ENCODE measurements at regions of chr15 and their contacts with region 1.

Region 1: DNA sequence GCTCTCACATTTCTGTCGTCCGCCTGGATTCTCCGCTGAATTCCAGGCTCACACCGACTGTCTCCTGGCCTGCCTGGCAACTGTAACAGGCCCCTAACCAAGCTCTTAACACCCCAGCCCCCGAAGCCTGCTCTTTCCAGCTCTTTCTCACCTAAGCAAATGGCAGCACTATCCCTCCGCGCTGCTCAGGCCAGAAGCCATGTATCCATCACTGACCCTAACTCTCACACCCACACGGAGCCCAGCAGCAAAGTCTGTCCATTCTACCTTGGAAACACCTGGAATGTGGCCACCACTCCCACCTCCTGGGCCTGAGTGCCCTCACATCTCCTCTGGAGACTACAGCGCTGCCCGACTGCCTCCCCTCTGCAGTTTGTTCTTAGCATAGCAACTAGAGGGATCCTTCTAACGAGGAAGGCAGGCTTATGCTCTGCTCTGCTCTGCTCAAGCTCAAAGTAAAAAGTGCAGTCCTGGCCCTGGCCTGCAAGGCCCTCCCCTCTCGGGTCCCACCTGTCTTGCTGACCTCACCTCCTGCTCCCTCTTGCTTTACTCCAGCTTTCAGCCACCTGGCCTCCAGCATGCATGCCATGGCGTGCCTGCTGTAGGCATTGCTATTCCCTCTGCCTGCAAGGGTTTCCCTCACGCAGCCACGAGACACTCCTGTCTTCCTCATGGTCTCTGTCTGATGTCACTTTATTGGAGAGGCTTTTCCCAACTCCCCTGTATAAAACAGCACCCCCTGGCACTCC is 27.2 kb downstream of the FEM1B start:
- DNase-seq: peak; percentile 33
- ATAC-seq: no peak
- H3K4me3 Mint-ChIP-seq: no peak overlapping the region
- H3K27ac Mint-ChIP-seq: no peak overlapping the region
- H3K4me1 Mint-ChIP-seq: peaks cover 9% of the 10 kb centered on the region
- H3K27me3 Mint-ChIP-seq: peaks cover 6% of the 10 kb centered on the region

Region 2: DNA sequence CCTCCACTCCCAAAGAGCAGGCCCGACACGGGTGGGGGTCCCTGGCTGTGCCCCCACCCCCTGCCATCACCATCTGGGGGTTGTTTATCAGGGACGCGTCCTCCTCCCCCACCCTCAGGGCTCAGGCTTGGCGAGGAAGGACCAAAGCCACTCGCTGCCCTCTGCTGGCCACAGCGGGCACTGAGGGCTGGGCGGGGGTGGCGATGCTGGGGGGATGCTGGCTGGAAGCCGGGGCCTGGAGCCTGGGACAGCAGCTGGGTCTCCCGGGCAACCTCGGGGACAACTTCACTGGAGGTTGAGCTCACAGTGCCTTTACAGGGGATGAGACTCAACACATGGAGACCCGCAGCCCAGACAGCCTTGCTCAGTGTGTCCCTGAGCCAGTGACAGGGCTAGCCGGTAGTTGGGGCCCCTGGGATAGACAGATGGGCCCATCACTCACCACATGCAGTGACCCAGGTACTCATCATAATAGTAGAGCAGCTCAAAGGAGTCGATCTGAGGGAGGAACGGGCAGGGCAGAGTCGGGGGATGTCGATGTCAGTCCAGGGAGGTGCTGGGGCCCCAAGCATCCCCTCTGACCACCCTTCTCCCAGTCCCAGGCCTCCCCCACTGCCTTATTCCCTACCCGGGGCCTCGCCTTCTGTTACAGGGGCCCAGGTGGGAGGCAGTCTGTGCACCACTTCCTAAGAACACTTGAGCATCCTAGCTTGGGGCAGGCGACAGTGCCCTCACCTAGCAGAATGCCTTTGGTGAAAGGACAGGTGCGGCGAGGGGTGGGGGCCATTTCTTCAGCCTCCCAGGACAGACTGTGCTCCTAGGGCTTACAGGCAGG is 93.7 kb before region 1 on chr15:
- CTCF ChIA-PET with region 1: no interaction called
- DNase-seq: peak; percentile 60
- ATAC-seq: peak; percentile 50
- H3K4me3 Mint-ChIP-seq: no peak overlapping the region
- H3K27ac Mint-ChIP-seq: no peak overlapping the region
- H3K4me1 Mint-ChIP-seq: peaks cover 23% of the 10 kb centered on the region
- H3K27me3 Mint-ChIP-seq: no peaks in the 10 kb centered on the region

Region 3: DNA sequence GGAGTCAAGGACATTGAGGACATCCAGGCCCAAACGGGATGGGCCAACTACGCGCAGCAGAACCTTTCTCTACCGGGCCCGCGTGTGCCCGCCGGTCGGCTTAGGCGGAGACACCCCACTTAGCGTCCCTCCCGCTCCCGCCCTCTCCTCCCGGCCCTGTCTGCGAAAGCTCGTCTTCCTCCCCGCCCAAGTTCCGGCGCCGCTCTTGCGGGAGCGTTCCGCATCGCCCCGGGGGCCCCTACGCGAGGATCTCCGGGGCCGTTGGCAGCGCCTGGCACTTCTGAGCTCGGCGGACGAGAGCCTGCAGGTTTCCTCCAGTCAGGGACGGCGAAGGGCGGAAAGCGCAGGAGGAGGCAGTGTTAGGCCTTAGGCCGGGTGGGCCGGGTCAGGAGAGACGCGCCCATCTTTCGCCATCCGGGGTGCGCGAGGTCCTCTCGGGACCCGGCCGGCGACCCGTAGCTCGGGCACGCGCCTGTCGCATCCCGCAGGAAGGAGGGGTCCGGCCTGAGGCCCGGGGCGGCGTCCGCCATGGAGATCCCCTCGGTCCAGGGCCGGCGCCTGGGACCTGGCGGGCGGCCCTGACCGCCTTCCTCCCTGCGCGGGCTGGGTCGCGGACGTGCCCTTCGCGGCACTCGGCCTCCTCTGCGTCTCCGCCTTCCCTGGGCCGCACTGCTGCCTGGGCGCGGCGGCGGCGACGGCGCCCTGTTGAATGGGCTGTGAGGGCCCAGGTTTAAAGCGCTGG is 27.0 kb before region 1 on chr15 and contains the start of gene FEM1B:
- CTCF ChIA-PET with region 1: interaction called, 25 read pairs
- DNase-seq: peak; percentile 93
- ATAC-seq: peak; percentile 85
- H3K4me3 Mint-ChIP-seq: peak within 1 kb of the TSS; percentile 92
- H3K27ac Mint-ChIP-seq: peak within 1 kb of the TSS; percentile 95
- H3K4me1 Mint-ChIP-seq: peaks cover 46% of the 10 kb centered on the region
- H3K27me3 Mint-ChIP-seq: no peaks in the 10 kb centered on the region
- total RNA-seq, gene FEM1B: 48.3 to 50.1 TPM

Region 4: GRCh38 chr15:68316061-68316804 is 11.5 kb after region 1 on chr15:
- CTCF ChIA-PET with region 1: interaction called, 13 read pairs
- DNase-seq: no peak
- ATAC-seq: no peak
- H3K4me3 Mint-ChIP-seq: no peak overlapping the region
- H3K27ac Mint-ChIP-seq: no peak overlapping the region
- H3K4me1 Mint-ChIP-seq: no peaks in the 10 kb centered on the region
- H3K27me3 Mint-ChIP-seq: peaks cover 5% of the 10 kb centered on the region

Region 5: GRCh38 chr15:68389936-68390790 is 85.4 kb after region 1 on chr15:
- CTCF ChIA-PET with region 1: interaction called, 48 read pairs
- DNase-seq: peak; percentile 85
- ATAC-seq: peak; percentile 99
- H3K4me3 Mint-ChIP-seq: no peak overlapping the region
- H3K27ac Mint-ChIP-seq: peak overlapping the region; percentile 38
- H3K4me1 Mint-ChIP-seq: peaks cover 23% of the 10 kb centered on the region
- H3K27me3 Mint-ChIP-seq: peaks cover 34% of the 10 kb centered on the region

Region 6: DNA sequence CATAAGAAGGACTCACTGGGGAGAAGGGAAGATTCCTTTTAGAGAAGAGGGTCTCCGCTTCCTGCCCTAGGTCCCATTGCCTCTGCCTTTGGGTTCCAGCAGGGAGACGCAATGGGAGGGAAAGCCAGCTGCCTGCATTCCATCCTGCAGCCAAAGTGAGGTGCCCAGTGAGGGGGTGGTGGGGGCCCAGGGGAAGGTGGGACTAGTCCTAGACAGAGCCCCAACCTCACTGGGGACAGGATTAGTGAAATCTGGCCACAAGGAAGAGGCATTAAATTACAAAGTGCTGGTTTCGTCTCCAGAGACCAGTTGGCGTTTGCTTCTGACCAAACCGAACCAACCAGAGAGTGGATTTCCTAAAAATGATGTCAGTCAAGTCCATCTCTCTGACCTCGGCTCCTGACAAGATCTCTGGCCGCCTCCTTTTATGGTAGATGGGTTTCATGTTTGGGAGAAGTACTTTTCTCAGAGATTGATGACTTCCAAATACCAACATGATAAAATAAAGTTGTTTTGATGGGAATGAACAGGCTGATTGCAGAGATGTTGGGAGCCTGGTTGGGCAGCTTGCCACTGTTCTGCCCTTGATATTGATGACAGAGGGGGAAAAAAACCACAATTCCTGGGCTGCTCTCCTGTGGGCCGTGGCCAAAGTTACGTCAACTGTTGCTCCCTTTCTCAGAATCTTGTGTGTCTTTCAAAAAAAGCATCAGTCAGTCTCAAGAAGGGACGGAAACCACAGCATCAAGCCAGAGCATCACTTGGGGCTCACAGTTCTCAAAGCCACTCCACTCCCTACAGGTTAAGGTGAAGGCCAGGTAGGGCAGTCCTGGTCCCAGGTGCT is 102.5 kb after region 1 on chr15:
- CTCF ChIA-PET with region 1: no interaction called
- DNase-seq: peak; percentile 38
- ATAC-seq: no peak
- H3K4me3 Mint-ChIP-seq: no peak overlapping the region
- H3K27ac Mint-ChIP-seq: no peak overlapping the region
- H3K4me1 Mint-ChIP-seq: peaks cover 5% of the 10 kb centered on the region
- H3K27me3 Mint-ChIP-seq: peaks cover 4% of the 10 kb centered on the region

Region 7: GRCh38 chr15:68550481-68551295 is 245.9 kb after region 1 on chr15:
- CTCF ChIA-PET with region 1: interaction called, 28 read pairs
- DNase-seq: peak; percentile 82
- ATAC-seq: no peak
- H3K4me3 Mint-ChIP-seq: no peak overlapping the region
- H3K27ac Mint-ChIP-seq: no peak overlapping the region
- H3K4me1 Mint-ChIP-seq: peaks cover 10% of the 10 kb centered on the region
- H3K27me3 Mint-ChIP-seq: peaks cover 43% of the 10 kb centered on the region

Measured in activated CD8-positive, alpha-beta memory T cell treated with anti-CD3 and anti-CD28 coated beads, Interleukin-2, amount 10 ng/mL, durations not matched to agents 7 days and 5 days (primary cell).